Endothelial cell of umbilical vein (primary cell): ENCODE measurements at regions of chr4 and their contacts with region 1.

Region 1: GRCh38 chr4:88211473-88212252 is 53.2 kb upstream of the ABCG2 start:
- DNase-seq: peak; percentile 69
- H3K4me3 ChIP-seq: no peak overlapping the region
- H3K27ac ChIP-seq: no peak overlapping the region
- H3K4me1 ChIP-seq: no peaks in the 10 kb centered on the region
- H3K27me3 ChIP-seq: no peaks in the 10 kb centered on the region
- CTCF ChIP-seq: peak; percentile 41 to 43
- POLR2A ChIP-seq: no peak

Region 2: DNA sequence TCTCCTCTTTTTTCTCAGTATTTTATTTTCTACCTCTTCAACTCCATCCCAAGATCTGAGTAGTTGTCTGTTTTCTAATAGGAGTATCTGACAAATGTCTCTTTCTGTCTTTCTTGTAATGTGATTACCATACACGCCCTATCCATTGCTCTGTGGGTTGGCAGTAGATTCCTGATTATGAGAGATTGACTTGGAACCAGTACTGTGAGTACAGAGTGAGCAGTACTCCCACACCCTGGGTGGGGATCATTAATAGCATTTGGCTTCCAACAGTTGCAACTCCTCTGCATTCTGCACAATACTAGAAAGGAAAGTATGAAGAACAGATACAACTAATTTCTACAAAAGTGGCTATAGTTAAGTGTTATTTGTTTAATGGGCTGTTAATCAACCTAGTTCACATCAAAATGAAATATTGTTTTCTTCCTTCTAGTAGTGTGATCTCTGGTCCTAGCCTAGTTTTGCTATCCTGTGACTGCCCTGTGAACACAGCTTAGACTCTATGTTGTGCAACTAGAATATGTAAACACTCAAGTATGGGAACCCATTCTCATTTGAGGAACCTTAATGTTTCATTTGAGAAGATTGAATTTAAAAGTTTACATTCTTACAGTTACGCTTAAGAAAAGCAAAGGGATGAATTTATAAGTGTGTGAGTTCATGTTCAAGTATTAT is 1504.6 kb before region 1 on chr4:
- CTCF ChIA-PET with region 1: no interaction called
- POLR2A ChIA-PET with region 1: no interaction called
- dilution Hi-C with region 1: no loop called
- intact Hi-C with region 1: no loop called
- DNase-seq: no peak
- H3K4me3 ChIP-seq: no peak overlapping the region
- H3K27ac ChIP-seq: no peak overlapping the region
- H3K4me1 ChIP-seq: no peaks in the 10 kb centered on the region
- H3K27me3 ChIP-seq: no peaks in the 10 kb centered on the region
- CTCF ChIP-seq: no peak
- POLR2A ChIP-seq: no peak

Region 3: DNA sequence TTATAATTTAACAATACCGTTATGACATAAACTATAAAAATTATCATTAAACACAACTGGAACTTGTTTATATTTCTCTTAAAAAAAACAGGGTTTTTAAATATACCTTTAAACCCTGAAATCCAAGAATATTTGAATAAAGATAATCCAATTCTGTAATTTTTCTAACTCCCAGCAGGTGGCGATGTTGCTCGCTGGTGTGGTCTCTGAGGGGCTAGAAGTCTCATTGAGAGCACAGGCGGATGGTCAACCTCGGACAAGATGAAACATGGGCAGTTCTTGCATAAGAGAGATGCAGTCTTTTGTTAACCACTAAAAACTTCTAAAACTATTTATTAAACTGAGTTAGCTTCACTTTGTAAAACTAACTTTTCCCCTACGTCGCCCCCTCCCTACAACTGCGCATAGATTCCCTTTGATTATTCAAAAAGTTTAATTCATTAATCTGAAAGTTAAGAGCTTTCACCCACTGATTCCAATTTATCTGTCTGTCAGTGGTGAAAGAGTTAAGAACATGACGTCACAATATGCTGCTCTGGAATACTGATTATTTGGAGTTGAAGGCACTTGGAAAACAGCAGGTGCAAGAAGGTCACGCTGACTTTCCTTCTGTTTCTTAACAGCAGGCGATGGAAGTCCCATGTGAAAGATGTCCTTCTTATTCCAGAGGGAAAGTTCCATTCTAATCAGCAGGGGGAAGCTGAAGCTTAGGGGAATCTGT is 532.1 kb before region 1 on chr4:
- CTCF ChIA-PET with region 1: interaction called, 11 read pairs
- POLR2A ChIA-PET with region 1: no interaction called
- dilution Hi-C with region 1: no loop called
- intact Hi-C with region 1: loop called (anchors 1 kb)
- DNase-seq: peak; percentile 52
- H3K4me3 ChIP-seq: no peak overlapping the region
- H3K27ac ChIP-seq: no peak overlapping the region
- H3K4me1 ChIP-seq: no peaks in the 10 kb centered on the region
- H3K27me3 ChIP-seq: no peaks in the 10 kb centered on the region
- CTCF ChIP-seq: peak; percentile 61 to 76
- POLR2A ChIP-seq: no peak

Region 4: DNA sequence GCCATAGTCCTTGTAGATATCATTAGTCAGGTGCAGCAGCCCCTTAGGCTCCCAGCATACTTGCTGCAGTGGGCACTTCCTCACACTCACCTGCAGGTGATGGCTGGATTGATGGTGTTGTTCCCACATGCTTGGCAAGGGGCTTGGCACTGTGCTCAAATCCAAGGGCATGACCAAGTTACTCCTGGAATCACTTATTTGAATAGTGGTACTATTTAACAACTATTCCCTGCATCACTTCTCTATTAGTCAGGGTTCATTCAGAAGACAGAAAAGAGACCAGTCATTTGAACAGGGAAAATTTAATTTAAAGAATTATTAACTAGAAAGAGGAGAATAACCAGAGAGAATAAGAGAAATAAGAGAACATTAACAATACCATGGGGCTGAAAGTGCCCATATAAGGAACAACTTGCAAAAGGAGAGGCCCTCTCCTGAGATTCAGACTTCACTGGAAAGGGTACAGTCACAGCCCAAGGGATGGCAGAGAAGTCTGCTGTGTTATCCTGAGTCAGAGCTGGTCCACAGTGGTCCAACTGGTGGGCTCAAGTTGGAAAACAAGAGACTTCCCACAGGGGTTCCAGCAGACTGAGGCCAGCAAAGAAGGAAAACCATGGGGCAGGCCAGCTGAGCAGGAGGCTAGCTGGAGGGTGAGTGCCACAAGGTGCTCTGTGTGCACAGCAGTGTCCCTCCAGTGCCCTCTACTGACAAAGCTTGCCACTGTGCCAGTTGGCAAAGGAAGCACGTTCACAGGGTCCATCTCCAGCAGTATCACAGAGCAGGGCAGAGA is 226.4 kb before region 1 on chr4:
- CTCF ChIA-PET with region 1: interaction called, 19 read pairs
- POLR2A ChIA-PET with region 1: no interaction called
- dilution Hi-C with region 1: no loop called
- intact Hi-C with region 1: loop called (anchors 1 kb)
- DNase-seq: peak; percentile 66
- H3K4me3 ChIP-seq: no peak overlapping the region
- H3K27ac ChIP-seq: no peak overlapping the region
- H3K4me1 ChIP-seq: no peaks in the 10 kb centered on the region
- H3K27me3 ChIP-seq: peaks cover 2 to 3% of the 10 kb centered on the region in 2 experiments
- CTCF ChIP-seq: peak; percentile 63 to 79
- POLR2A ChIP-seq: no peak

Region 5: DNA sequence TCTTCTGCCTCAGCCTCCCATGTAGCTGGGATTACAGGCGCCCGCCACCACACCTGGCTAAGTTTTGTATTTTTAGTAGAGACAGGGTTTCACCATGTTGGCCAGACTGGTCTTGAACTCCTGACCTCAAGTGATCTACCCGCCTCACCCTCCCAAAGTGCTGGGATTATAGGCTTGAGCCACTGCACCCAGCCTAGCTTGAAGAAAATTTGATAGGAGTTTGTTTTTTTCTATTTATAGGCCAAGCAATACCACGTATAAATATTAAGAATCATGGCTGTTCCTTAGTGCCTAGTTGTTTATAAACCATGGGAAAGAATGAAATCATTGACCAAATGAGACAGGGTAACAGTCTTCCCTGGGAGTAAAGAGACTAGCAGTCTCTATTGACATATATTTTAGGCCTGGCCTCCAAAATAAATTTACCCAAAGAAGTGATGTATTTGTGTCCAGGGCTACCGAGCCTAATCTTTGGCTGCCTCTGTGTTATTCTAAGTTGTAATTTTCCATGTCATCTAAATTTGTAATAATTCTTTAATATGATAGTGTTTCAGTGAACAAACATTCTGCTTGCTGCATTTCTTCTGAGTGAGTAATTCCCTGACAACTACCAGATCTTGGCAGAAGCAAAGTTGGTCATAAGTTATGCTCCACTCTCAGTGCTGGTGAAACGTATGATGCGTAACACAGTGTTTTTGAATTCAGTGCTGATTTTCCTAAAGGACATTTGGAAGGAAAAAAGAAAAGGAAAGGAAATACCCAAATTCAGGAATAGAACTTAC is 194.0 kb before region 1 on chr4:
- CTCF ChIA-PET with region 1: interaction called, 10 read pairs
- POLR2A ChIA-PET with region 1: no interaction called
- dilution Hi-C with region 1: no loop called
- intact Hi-C with region 1: no loop called
- DNase-seq: peak; percentile 94
- H3K4me3 ChIP-seq: no peak overlapping the region
- H3K27ac ChIP-seq: peak overlapping the region; percentile 88
- H3K4me1 ChIP-seq: peaks cover 21% of the 10 kb centered on the region
- H3K27me3 ChIP-seq: no peaks in the 10 kb centered on the region
- CTCF ChIP-seq: no peak
- POLR2A ChIP-seq: no peak

Region 6: GRCh38 chr4:88054901-88055300 is 156.8 kb before region 1 on chr4:
- CTCF ChIA-PET with region 1: interaction called, 204 read pairs
- POLR2A ChIA-PET with region 1: interaction called, 7 read pairs
- dilution Hi-C with region 1: no loop called
- intact Hi-C with region 1: loop called (anchors 1 kb)
- DNase-seq: peak; percentile 77
- H3K4me3 ChIP-seq: no peak overlapping the region
- H3K27ac ChIP-seq: no peak overlapping the region
- H3K4me1 ChIP-seq: peaks cover 4% of the 10 kb centered on the region
- H3K27me3 ChIP-seq: no peaks in the 10 kb centered on the region
- CTCF ChIP-seq: peak; percentile 46 to 72
- POLR2A ChIP-seq: no peak

Region 7: DNA sequence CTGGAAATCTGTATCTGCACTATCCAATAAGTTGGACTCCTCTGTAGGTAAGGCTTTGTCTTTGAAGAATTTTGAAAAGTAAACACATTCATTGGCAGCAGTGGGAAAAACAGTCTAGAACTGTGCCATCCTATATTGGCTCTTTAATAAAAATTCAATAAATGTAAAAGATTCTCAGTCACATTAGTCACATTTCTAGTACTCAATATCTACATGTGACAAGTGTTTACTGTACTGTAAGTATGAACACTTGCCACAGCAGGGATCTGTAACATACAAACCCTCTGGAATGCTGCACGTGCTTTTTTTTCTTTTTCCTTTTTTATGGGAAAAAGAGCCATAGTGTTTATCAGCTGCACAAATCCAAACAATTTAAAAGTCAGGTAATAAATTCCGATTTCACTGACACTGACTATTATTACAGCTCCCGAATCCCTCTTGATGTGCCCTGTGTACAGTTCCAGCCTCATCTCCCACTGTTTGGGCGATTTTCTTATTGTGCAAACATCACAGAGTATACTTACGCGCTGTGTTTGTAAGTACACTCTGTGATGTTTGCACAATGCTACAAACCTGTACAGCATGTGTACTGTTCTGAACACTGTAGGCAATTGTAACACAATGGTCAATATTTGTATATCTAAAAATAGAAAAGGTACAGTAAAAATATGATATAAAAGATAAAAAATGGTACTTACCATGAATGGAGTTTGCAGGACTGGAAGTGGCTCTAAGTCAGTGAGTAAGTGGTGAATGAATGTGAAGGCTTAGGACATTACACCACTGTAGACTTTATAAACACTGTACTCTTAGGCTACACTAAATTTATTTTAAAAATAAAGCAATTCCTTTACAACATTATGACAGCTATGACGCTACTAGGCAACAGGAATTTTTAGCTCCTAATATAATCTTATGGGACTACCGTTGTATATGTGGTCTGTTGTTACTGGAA is 303.2 kb after region 1 on chr4:
- CTCF ChIA-PET with region 1: interaction called, 519 read pairs
- POLR2A ChIA-PET with region 1: no interaction called
- dilution Hi-C with region 1: no loop called
- intact Hi-C with region 1: no loop called
- DNase-seq: no peak
- H3K4me3 ChIP-seq: no peak overlapping the region
- H3K27ac ChIP-seq: no peak overlapping the region
- H3K4me1 ChIP-seq: peaks cover 10% of the 10 kb centered on the region
- H3K27me3 ChIP-seq: no peaks in the 10 kb centered on the region
- CTCF ChIP-seq: no peak
- POLR2A ChIP-seq: no peak

Region 8: DNA sequence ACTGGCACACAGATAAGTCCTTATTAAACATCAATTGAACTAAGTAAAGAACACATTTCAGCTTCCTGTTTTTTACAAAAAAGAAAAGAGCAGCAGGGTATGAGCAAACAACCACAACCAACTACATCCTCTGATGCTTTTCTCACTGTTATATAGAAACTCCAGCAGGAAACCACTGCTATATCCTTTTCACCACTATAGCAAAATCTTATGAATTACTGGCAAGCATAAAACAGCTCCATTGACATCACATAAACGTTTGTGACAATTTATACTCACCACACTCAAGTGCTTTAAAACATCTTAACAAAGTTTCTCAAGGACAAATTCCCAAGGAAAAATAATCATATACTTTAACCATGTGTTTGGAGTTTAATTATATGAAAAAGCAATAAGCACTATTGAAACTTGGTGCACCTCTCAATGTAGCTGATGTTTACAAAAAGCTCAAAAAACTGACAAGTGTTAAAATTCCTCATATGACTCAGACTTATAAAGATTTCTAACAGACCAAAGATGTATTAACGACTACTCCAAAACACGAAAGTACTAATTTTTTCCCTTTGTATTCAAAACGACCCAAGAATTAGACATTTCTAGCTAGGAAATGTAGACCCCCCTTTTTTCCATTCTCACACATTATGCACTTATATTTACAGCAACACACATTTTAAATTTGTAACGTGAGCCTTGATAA is 1083.1 kb after region 1 on chr4:
- CTCF ChIA-PET with region 1: no interaction called
- POLR2A ChIA-PET with region 1: no interaction called
- dilution Hi-C with region 1: no loop called
- intact Hi-C with region 1: no loop called
- DNase-seq: peak; percentile 22
- H3K4me3 ChIP-seq: no peak overlapping the region
- H3K27ac ChIP-seq: no peak overlapping the region
- H3K4me1 ChIP-seq: peaks cover 4% of the 10 kb centered on the region
- H3K27me3 ChIP-seq: peaks cover 5% of the 10 kb centered on the region in 2 experiments
- CTCF ChIP-seq: no peak
- POLR2A ChIP-seq: no peak